ENCODE measurements at regions of chr19 and their contacts with region 1.

Region 1: DNA sequence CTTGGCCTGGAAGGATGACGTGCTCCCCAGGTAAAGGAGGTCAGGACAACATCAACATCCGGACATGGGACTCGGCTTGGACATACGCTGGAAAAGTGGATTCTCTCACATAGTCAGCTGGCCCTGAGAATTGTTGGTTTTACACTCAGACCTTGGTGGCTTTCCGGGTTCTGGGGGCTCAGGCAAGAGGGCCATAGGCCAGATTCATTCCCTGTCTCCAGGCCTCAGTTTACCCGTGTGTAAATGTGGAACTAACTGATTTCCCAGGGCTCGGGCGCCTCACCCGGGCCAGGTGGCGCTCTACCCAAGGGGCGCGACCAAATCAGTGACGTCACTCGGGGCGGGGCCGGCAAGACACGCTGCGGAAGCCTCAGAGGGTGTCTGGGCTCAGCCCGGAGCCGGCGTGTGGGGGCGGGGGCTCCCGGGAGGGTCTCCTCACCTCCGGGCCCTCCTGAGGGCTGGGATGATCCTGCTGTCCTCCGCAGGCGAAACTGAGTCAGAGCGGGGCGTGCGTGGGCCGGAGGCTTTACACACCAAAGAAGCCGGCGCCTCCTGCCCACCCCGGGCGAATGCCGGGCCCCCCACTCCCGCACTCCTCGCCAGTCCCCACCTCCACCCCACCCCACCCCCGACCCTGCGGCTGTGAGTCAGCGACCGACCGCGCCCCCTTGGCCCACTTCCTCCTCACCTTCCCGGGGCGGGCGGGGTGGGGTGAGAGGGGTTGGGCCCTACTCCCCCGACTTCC is 861 bp upstream of the VASP start:
- DNase-seq: peak; percentile 98
- ATAC-seq: peak; percentile 87

Region 2: GRCh38 chr19:45022010-45022409 is 484.4 kb before region 1 on chr19:
- intact Hi-C with region 1: no loop called
- DNase-seq: no peak
- ATAC-seq: no peak

Region 3: DNA sequence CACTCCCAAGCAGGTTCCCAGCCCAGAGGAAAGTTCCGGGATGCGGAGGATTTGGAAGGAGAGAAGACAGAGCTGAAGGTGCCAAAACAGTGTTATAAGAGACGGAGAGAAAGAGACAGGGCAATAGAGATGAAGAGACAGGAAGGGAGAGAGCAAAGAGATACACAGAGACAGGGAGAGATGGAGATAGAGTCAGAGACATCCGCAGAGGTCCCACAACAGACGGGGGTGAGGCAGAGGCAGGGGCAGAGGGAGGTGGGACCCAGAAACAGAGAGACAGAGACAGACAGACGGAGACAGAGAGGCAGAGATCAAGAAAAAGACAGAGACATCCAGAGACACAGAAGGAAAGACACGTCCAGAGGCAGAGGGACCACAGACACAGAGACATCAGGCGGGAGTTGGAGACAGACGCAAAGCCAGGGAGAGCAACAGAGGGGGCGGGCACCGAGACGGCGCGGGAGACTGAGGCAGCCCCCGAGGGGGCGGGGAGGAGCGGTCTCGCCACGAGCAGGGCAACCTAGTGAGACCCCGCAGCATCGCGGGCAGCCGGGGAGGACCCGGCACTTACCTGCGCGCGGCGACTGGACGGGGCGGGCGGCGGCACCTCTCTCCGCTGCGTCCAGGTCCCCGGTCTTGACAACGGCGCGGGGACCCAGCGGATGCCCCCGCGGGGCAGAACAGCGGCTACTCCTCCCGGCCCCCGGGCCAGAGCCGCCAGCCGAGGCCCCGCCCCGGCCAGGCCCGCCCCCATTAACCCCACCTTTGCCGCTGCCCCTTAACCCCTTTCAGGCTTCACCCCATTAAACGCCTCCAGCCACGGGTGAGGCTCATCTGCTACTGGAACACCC is 95.3 kb after region 1 on chr19 and contains the start of gene GPR4:
- intact Hi-C with region 1: loop called (anchors 5 kb)
- DNase-seq: no peak
- ATAC-seq: peak; percentile 66
- total RNA-seq, gene GPR4: 5.4 TPM